Heart left ventricle (tissue), 16 donors: ENCODE measurements at regions of chr16 and their contacts with region 1.

Region 1: DNA sequence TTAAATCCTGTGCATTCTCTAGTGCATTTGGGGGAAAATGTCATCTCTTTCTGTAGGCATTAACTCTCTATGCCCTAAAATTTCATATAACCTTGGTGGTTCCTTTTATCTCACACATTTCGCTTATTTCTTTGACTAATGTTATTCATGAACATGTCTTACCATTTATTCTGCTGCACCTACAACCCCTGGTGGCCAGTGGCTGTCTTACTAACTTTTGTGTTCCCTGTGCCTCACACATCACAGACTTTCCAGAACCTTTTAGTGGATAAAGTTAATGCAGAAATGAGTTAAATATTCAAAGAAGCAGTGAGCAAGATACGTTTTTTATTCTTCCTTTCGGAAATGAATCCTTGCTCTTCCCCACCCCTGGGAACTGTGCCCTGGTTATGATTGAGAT is 111.9 kb downstream of the CDH13 start:
- DNase-seq: peak in 1 of 5 donors; percentile 28
- ATAC-seq: no peak
- H3K4me3 ChIP-seq: no peak overlapping the region
- H3K27ac ChIP-seq: peak overlapping the region in 7 of 12 donors; percentile 22 to 90 (median 86)
- H3K4me1 ChIP-seq: peaks cover 8 to 51% (median 25%) of the 10 kb centered on the region in 12 donors
- H3K27me3 ChIP-seq: no peaks in the 10 kb centered on the region
- CTCF ChIP-seq: peak in 11 of 12 donors; percentile 15 to 56 (median 41)
- POLR2A ChIP-seq: no peak

Region 2: DNA sequence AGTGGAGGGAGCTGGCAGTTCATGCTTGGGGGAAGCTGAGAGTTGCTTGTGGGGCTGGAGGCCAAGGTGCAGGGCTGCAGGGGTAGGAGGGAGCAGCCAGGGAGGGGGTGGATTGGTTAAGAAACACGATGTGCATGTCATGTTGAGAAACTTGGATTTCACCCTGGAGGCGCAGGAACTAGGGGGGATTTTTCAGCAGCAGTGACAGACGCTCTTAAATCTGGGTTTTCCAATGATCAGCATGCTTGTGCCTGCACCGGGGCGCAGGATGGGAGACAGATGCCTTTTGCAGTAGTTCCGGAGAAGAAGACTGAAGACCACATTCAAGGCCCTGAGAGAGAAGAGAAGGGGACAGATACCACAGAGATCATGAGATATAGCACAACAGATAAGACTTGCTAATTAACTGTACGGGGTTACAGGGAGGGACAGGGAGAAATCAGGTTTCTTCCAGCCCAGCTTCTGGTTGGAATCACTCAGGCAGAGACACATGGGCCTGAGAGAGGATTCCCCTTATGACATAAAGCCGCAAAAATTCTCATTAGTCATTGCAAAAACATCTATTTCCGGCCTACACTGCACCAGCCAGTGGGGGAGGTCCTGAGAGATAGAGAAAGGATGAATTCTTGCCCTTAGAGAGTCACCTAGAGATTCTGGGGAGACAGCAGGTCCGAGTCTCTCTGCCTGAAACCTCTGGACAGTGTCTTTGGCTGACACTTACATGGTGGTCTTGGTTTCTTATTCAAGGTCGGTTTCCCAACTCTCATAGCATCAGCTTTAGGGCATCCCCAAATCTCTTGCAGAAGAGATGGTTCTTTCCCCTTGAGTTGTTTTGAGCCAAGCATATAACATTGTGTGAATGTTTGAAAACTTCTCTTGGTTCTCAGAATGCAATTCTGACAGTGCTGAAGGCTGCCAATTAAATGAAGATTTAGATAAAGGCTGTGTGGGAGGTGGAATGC is 84.9 kb before region 1 on chr16:
- intact Hi-C with region 1: loop called in 1 of 10 experiments (anchors 5 kb)
- DNase-seq: no peak
- ATAC-seq: peak in 3 of 4 donors; percentile 64 to 84 (median 82)
- H3K4me3 ChIP-seq: no peak overlapping the region
- H3K27ac ChIP-seq: peak overlapping the region in 9 of 12 donors; percentile 5 to 81 (median 41)
- H3K4me1 ChIP-seq: peaks cover 6 to 66% (median 43%) of the 10 kb centered on the region in 12 donors
- H3K27me3 ChIP-seq: no peaks in the 10 kb centered on the region
- CTCF ChIP-seq: no peak
- POLR2A ChIP-seq: no peak

Region 3: DNA sequence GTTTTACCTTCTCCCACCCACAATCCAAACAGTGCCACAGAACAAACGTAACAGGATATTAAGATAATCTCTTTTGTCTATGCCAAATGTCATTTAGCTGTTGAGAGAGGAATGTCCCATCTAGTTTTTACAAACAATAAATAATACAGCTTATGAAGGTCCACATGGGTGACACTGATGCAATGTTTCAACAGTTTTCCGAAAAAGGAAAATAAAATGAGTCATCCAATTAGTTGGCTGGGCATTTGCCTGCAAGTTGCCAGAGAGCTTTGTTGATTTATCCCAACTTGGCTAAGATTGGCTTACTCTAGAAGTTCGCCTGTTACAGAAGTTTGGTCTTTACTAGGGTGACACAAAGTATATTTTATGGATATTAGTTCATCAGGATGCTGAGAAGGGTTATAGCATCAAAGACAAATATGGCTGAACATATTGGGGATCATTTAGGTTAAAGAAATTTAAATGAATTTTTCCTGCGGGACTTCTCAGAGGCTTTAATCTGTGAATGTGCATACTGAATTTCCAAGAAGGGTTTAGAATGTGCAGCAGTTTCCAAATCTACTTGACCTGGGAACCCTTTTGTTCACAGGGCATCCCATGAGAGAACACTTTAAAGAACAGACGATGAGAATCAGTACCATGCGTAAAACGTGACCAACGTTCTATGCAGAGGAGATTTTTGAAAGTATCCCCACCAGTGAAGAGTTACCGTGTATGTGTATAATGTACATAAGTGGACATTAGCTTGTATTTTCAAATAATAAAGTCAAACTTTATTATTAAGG is 38.8 kb before region 1 on chr16:
- intact Hi-C with region 1: loop called in 1 of 10 experiments (anchors 5 kb)
- DNase-seq: peak in 4 of 5 donors; percentile 37 to 50 (median 44)
- ATAC-seq: peak; percentile 76 to 81 (median 80)
- H3K4me3 ChIP-seq: peak overlapping the region in 1 of 12 donors; percentile 11
- H3K27ac ChIP-seq: peak overlapping the region; percentile 64 to 90 (median 82)
- H3K4me1 ChIP-seq: peaks cover 7 to 65% (median 52%) of the 10 kb centered on the region in 12 donors
- H3K27me3 ChIP-seq: no peaks in the 10 kb centered on the region
- CTCF ChIP-seq: no peak
- POLR2A ChIP-seq: no peak

Region 4: DNA sequence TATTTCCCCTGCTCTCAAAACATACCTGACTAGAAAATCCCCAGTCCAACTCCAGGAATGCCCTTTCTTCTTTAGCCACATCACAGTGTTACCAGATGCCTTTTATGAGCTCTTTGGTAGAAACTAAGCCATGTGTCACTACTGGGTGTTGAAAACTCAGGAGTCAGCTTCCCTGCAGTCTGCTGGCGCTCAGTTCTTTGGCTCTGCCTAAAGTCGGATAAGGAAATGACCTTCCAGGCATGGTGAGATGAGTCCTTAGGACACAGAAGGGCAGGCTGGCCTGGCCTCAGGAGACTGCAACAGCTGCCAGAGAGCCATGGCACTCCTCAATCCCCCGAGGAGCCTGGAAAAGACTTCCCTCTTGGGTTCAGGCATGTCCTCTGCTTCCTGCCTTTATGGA is 22.9 kb before region 1 on chr16:
- intact Hi-C with region 1: loop called in 1 of 10 experiments (anchors 2 kb)
- DNase-seq: peak; percentile 52 to 86 (median 70)
- ATAC-seq: peak; percentile 89 to 96 (median 95)
- H3K4me3 ChIP-seq: peak overlapping the region in 2 of 12 donors; percentile 33
- H3K27ac ChIP-seq: peak overlapping the region; percentile 51 to 86 (median 75)
- H3K4me1 ChIP-seq: peaks cover 0 to 39% (median 25%) of the 10 kb centered on the region in 12 donors
- H3K27me3 ChIP-seq: no peaks in the 10 kb centered on the region
- CTCF ChIP-seq: no peak
- POLR2A ChIP-seq: no peak

Region 5: DNA sequence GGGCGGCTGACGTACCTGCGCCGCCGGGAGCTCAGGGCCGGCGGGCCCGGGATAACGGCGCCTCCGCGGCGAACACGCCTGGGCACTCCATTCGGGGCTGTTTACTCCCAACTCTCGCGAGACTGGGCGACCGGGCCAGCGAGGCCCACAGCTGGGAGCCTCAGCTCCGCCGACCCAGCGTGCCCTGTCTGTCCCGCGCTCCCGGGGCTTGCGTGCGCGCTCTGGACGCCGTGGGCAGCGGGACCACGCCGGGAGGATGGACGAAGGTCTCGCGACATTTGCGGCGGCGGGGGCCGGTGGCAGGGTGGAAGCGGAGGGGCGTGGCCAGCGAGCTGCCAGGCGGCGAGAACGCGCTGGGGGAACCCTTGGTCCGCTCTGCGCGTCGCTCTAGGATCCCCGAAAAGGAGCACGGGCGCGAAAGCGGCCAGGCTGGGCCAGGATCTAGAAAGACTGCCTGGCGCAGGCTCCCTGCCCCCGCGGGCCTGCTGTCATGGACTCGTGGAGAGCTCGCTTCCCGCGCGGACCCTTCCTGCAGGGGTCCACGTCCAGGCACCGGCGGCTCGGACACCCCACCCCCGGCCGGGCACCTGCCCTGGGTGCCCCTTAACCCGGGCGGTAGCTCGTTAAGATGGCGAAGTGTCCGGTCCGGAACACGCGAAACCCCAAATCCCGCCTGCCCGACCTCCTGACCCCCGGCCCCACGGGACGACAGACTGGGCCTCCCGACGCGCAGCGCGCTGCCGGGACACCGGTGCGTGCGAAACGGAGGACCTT is 1378.2 kb after region 1 on chr16 and contains the start of gene MBTPS1:
- intact Hi-C with region 1: no loop called
- DNase-seq: peak; percentile 99 to 100 (median 99)
- ATAC-seq: peak; percentile 97 to 99 (median 98)
- H3K4me3 ChIP-seq: peak within 1 kb of the TSS; percentile 49 to 100 (median 84)
- H3K27ac ChIP-seq: peak within 1 kb of the TSS; percentile 80 to 99 (median 92)
- H3K4me1 ChIP-seq: peaks cover 0 to 29% (median 19%) of the 10 kb centered on the region in 12 donors
- H3K27me3 ChIP-seq: no peaks in the 10 kb centered on the region
- CTCF ChIP-seq: peak in 2 of 12 donors; percentile 1 to 4
- POLR2A ChIP-seq: peak in 1 of 2 donors; percentile 91
- total RNA-seq, gene MBTPS1: 57.3 to 91.4 (median 68.6) TPM